AG04450 (cell line): ENCODE measurements at regions of chr3 and their contacts with region 1.

Region 1: GRCh38 chr3:32128936-32129335 is 22.5 kb downstream of the GPD1L start:
- DNase-seq: no peak
- H3K4me3 ChIP-seq: no peak overlapping the region
- H3K27ac ChIP-seq: no peak overlapping the region
- H3K27me3 ChIP-seq: peaks cover 4% of the 10 kb centered on the region
- CTCF ChIP-seq: no peak

Region 2: DNA sequence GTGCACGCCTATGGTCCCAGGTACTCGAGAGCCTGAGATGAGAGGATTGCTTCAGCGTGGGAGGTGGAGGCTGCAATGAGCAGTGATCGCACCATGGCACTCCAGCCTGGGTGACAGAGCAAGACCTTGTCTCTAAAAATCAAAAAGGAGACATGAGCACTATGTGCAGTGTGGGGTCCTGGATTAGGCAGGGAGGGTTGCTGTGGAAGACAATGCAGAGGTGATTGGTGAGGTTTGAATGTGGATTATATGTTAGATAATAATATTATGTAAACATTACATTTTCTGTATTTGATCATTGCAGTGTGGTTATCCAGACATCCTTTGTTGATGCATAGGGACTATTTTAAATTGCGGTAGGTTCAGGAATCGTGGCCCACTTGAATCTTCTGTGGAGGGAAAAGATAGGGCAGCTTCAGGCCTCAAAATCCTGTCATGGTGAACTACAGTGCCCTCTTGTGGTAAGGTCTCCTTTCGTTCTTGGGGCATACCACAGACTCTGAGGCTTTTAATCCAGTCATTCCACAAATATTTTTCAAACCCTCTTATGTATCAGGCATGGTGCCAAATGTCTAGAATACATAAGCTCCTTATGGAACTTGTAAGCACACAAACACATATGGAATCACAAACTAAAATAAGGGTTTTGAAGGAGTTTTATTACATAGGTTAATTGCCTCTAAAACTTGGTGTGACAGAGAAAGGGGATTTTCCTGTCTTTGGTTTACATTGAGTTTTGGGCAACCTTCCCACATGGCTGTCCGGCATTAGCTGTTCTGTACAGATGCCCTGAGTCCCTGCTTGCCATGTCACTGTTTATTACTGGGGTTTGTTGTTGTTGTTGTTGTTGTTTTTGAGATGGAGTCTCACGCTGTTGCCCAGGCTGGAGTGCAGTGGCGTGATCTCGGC is 15.2 kb after region 1 on chr3:
- CTCF ChIA-PET with region 1: interaction called, 15 read pairs
- POLR2A ChIA-PET with region 1: no interaction called
- DNase-seq: peak; percentile 91
- H3K4me3 ChIP-seq: no peak overlapping the region
- H3K27ac ChIP-seq: peak overlapping the region; percentile 34
- H3K27me3 ChIP-seq: no peaks in the 10 kb centered on the region
- CTCF ChIP-seq: peak; percentile 77

Region 3: GRCh38 chr3:32166654-32167053 is 37.7 kb after region 1 on chr3:
- CTCF ChIA-PET with region 1: no interaction called
- POLR2A ChIA-PET with region 1: no interaction called
- DNase-seq: no peak
- H3K4me3 ChIP-seq: no peak overlapping the region
- H3K27ac ChIP-seq: no peak overlapping the region
- H3K27me3 ChIP-seq: no peaks in the 10 kb centered on the region
- CTCF ChIP-seq: no peak

Region 4: DNA sequence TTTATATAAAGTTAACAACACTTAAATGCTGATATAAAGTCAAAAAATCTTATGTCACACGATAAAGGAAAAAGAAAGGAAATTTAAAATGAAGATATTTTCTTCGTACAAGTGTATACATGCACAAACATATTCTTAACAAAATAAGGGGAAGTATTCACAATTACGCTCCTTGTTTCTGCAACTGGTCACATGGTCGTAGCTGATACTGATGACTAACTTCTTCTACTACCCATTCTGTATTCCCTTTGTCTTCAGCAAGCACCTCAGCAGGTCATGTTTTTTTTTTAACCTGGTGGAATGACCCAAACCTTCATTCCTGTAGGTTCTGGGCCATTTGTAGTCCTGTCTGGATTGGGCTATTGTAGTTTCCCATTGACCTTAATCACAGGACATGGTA is 79.5 kb after region 1 on chr3:
- CTCF ChIA-PET with region 1: no interaction called
- POLR2A ChIA-PET with region 1: no interaction called
- DNase-seq: no peak
- H3K4me3 ChIP-seq: no peak overlapping the region
- H3K27ac ChIP-seq: no peak overlapping the region
- H3K27me3 ChIP-seq: peaks cover 2% of the 10 kb centered on the region
- CTCF ChIP-seq: no peak

Region 5: DNA sequence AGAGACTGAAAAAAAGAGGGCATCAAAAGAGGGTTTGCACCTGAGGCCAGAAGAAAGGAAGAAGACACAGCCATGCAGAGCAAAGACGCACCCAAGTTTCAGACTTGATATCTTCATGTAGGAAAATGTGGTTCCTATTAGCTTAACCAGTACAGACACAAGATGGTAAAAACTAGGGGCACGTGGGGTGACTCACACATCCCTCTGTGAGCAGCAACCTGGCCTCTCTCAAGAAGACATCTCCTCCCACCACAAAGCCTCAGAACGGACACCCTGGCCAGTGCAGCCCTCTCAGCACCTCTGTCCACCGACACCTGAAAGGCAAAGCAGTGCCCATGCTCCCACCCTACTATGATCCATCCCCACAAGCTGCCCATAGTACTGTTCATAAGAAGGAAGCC is 934.7 kb after region 1 on chr3:
- CTCF ChIA-PET with region 1: no interaction called
- POLR2A ChIA-PET with region 1: no interaction called
- DNase-seq: no peak
- H3K4me3 ChIP-seq: no peak overlapping the region
- H3K27ac ChIP-seq: no peak overlapping the region
- H3K27me3 ChIP-seq: no peaks in the 10 kb centered on the region
- CTCF ChIP-seq: no peak